Activated CD4-positive, alpha-beta memory T cell treated with anti-CD3 and anti-CD28 coated beads, Interleukin-2, amount 10 ng/mL, durations not matched to agents 7 days and 5 days (primary cell): ENCODE measurements at regions of chr9 and their contacts with region 1.

Region 1: GRCh38 chr9:70602321-70603019 is 188.0 kb upstream of the KLF9 start:
- DNase-seq: peak; percentile 50
- H3K4me3 Mint-ChIP-seq: no peak overlapping the region
- H3K27ac Mint-ChIP-seq: no peak overlapping the region
- H3K4me1 Mint-ChIP-seq: no peaks in the 10 kb centered on the region
- H3K27me3 Mint-ChIP-seq: no peaks in the 10 kb centered on the region

Region 2: DNA sequence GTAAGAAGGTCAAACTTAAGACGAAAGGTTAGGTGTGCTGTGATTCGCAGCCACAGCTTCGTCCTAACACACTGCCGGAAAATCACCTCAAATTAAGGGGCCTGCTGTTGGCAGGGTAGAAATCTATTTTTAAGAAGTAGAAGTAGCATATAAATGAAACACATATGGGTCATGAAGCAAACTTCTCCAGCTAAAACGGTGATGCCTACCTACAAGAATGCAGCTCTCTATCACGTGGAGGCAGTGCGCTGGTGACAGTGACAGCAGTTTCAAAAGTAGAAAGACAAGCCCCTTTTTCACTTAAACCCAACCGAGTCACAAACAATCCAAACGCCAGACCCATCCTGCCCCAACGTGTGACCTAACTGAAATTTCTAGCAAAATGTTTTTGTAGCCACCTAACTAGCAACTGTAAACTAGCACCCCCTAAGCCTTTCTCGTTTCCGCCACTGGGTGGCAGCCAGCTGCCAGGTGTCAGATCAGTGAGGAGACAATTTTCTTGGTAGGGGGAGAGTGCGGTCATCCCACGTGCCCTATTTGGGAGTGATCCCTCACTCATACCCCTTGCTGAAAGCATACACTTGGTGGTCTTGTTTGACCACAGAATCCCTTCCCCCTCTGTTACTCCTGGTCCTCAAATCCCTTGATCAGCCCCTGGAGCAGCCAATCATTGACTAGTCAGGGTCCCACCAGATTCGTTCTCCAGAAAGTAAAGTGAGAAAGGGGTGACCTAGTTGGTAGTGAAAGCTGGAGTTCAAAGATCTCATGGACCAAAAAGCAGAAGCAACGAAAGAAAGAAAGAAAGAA is 630.6 kb before region 1 on chr9:
- CTCF ChIA-PET with region 1: interaction called, 14 read pairs
- POLR2A ChIA-PET with region 1: no interaction called
- DNase-seq: peak; percentile 57
- H3K4me3 Mint-ChIP-seq: no peak overlapping the region
- H3K27ac Mint-ChIP-seq: no peak overlapping the region
- H3K4me1 Mint-ChIP-seq: no peaks in the 10 kb centered on the region
- H3K27me3 Mint-ChIP-seq: peaks cover 12% of the 10 kb centered on the region

Region 3: DNA sequence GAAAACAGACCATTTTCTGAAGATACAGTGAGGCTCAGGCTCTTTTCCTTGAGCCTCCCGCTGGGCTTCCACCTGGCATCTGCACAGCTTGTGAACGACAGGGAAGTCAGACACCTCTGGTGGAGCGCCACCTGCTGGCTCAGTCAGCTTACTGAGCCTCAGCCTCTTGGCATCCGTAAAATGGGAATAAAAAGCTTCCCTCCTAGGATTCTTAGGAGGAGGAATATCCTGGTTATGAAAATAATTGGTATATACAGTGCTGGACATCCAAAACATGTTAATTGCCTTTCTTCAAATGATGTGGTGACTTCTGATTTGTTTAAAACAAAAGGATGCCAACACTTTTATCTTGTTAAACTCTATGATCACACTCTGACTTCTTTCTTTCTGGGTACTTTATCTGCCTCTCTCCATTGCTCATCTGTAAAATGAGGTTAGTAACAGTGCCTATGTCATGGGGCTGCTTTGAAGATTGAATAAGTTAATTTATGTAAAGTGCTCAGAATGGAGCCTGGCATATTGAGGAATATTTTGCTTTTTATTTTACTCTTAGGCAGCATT is 491.3 kb before region 1 on chr9:
- CTCF ChIA-PET with region 1: interaction called, 18 read pairs
- POLR2A ChIA-PET with region 1: interaction called, 3 read pairs
- DNase-seq: peak; percentile 57
- H3K4me3 Mint-ChIP-seq: no peak overlapping the region
- H3K27ac Mint-ChIP-seq: no peak overlapping the region
- H3K4me1 Mint-ChIP-seq: peaks cover 3% of the 10 kb centered on the region
- H3K27me3 Mint-ChIP-seq: peaks cover 17% of the 10 kb centered on the region

Region 4: GRCh38 chr9:70340572-70340971 is 261.9 kb before region 1 on chr9:
- CTCF ChIA-PET with region 1: interaction called, 54 read pairs
- POLR2A ChIA-PET with region 1: interaction called, 3 read pairs
- DNase-seq: no peak
- H3K4me3 Mint-ChIP-seq: no peak overlapping the region
- H3K27ac Mint-ChIP-seq: no peak overlapping the region
- H3K4me1 Mint-ChIP-seq: peaks cover 2% of the 10 kb centered on the region
- H3K27me3 Mint-ChIP-seq: no peaks in the 10 kb centered on the region

Region 5: DNA sequence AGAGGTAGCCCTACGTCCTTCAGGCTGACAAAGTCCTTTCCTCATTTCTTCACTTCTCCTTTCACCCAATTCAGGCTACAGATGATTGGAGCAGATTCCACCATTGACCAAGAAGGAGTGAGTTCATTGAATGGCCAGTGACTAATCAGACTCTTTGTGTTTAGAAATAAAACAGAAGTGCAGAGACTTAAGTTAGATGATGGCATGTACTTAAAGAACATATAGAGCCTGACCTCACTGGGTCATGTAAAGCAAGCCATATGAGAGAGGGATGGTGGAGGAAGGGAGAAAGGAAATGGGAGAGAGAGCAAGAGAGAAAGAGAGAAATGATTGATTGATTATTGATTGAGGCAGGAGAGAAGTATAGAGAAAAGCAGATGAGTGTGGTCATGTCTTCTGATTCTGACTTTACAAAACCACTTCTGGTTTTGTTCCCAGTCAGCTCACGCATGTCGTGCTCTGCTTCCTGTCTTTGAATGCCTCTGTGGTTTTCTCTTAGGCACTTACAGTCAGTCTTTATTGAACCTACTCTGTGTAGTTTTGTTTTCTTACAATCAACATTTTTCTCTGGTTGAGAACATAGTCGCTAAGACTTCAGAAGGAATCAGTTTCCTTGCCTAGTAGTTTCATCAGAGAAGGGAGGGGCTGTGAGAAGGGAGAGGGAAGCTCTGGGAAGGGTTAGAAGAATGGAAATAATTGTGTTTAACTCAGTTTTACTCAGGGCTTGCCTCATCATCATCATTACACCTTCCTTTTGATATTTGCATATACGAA is 38.9 kb before region 1 on chr9:
- CTCF ChIA-PET with region 1: interaction called, 13 read pairs
- POLR2A ChIA-PET with region 1: interaction called, 10 read pairs
- DNase-seq: peak; percentile 79
- H3K4me3 Mint-ChIP-seq: peak overlapping the region; percentile 49
- H3K27ac Mint-ChIP-seq: peak overlapping the region; percentile 99
- H3K4me1 Mint-ChIP-seq: peaks cover 50% of the 10 kb centered on the region
- H3K27me3 Mint-ChIP-seq: no peaks in the 10 kb centered on the region